Prostate gland (tissue), 2 donors: ENCODE measurements at regions of chr9 and their contacts with region 1.

Region 1: GRCh38 chr9:36407122-36407723 is 7.2 kb upstream of the RNF38 start:
- DNase-seq: peak; percentile 54
- H3K4me3 ChIP-seq: no peak overlapping the region
- H3K27ac ChIP-seq: no peak overlapping the region
- H3K4me1 ChIP-seq: peaks cover 5% of the 10 kb centered on the region
- H3K27me3 ChIP-seq: no peaks in the 10 kb centered on the region
- CTCF ChIP-seq: peak; percentile 85 to 95 (median 90)
- POLR2A ChIP-seq: peak; percentile 18

Region 2: GRCh38 chr9:36445800-36446361 is 38.7 kb after region 1 on chr9:
- intact Hi-C with region 1: loop called (anchors 5 kb)
- DNase-seq: no peak
- H3K4me3 ChIP-seq: no peak overlapping the region
- H3K27ac ChIP-seq: no peak overlapping the region
- H3K4me1 ChIP-seq: no peaks in the 10 kb centered on the region
- H3K27me3 ChIP-seq: no peaks in the 10 kb centered on the region
- CTCF ChIP-seq: no peak
- POLR2A ChIP-seq: no peak

Region 3: DNA sequence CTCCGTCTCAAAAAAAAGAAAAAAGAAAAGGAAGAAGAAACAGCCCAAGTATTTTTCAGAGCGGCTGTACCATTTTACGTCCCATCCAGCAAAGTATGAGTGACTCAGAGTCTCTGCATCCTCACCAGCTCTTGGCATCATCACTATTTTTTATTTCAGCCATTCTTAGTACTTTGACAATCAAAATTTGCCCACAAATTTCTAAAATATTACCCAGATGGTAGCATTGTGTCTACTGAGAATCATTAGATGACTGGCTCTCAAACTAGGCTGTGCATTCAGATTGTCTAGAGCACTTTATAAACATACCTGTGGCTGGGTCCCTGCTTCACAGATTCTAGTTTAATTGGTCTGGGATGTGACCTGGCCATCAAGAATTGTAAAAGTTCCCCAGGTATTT is 143.9 kb after region 1 on chr9:
- intact Hi-C with region 1: loop called (anchors 1 kb)
- DNase-seq: no peak
- H3K4me3 ChIP-seq: no peak overlapping the region
- H3K27ac ChIP-seq: no peak overlapping the region
- H3K4me1 ChIP-seq: no peaks in the 10 kb centered on the region
- H3K27me3 ChIP-seq: no peaks in the 10 kb centered on the region
- CTCF ChIP-seq: no peak
- POLR2A ChIP-seq: no peak